ENCODE measurements at regions of chr16 and their contacts with region 1.

Region 1: GRCh38 chr16:54266363-54266955 is 20.1 kb downstream of the IRX3 start:
- ATAC-seq: peak in 3 of 8 experiments; percentile 72 to 91 (median 83)
- H3K4me3 ChIP-seq: no peak overlapping the region
- H3K27ac ChIP-seq: no peak overlapping the region
- H3K4me1 ChIP-seq: no peaks in the 10 kb centered on the region

Region 2: DNA sequence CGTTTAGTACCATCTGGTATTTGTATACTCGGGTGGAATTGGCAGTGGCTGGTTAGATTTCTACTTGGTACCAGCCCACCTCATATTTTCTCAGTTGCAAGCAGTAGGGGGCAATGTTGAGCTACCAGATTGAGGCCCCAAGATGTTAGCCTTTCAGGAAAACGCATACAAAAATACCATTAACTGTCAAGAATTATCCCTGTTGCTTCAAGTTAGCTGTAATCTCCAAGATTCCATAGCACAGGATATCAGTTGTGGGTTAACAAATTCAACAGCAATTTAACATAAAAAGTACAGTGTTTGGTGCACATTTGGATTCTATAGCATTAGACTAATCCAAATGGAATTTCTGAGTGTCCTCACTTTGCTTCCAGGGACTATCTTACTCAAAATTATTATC is 374.3 kb before region 1 on chr16:
- in situ Hi-C with region 1: loop called in 1 of 9 experiments (anchors 25 kb)
- ATAC-seq: peak; percentile 49 to 78 (median 71)
- H3K4me3 ChIP-seq: no peak overlapping the region
- H3K27ac ChIP-seq: no peak overlapping the region
- H3K4me1 ChIP-seq: peaks cover 7 to 46% of the 10 kb centered on the region in 2 donors

Measured in motor neuron (in vitro differentiated cells).